ENCODE measurements at regions of chr10 and their contacts with region 1.

Region 1: GRCh38 chr10:17599089-17599488 is 18.1 kb downstream of the HACD1 start:
- DNase-seq: peak in 1 of 2 donors; percentile 22
- ATAC-seq: peak in 4 of 8 donors; percentile 35 to 62 (median 42)
- H3K4me3 ChIP-seq: no peak overlapping the region
- H3K27ac ChIP-seq: no peak overlapping the region
- H3K4me1 ChIP-seq: peaks cover 0 to 7% (median 0%) of the 10 kb centered on the region in 9 donors
- H3K27me3 ChIP-seq: no peaks in the 10 kb centered on the region
- CTCF ChIP-seq: peak in 7 of 9 donors; percentile 29 to 55 (median 35)

Region 2: GRCh38 chr10:17409170-17409733 is 189.8 kb before region 1 on chr10:
- intact Hi-C with region 1: loop called in 2 of 10 experiments (anchors 5 to 10 kb)
- DNase-seq: no peak
- ATAC-seq: no peak
- H3K4me3 ChIP-seq: no peak overlapping the region
- H3K27ac ChIP-seq: no peak overlapping the region
- H3K4me1 ChIP-seq: peaks cover 0 to 4% (median 0%) of the 10 kb centered on the region in 9 donors
- H3K27me3 ChIP-seq: no peaks in the 10 kb centered on the region
- CTCF ChIP-seq: peak in 8 of 9 donors; percentile 21 to 54 (median 40)

Region 3: DNA sequence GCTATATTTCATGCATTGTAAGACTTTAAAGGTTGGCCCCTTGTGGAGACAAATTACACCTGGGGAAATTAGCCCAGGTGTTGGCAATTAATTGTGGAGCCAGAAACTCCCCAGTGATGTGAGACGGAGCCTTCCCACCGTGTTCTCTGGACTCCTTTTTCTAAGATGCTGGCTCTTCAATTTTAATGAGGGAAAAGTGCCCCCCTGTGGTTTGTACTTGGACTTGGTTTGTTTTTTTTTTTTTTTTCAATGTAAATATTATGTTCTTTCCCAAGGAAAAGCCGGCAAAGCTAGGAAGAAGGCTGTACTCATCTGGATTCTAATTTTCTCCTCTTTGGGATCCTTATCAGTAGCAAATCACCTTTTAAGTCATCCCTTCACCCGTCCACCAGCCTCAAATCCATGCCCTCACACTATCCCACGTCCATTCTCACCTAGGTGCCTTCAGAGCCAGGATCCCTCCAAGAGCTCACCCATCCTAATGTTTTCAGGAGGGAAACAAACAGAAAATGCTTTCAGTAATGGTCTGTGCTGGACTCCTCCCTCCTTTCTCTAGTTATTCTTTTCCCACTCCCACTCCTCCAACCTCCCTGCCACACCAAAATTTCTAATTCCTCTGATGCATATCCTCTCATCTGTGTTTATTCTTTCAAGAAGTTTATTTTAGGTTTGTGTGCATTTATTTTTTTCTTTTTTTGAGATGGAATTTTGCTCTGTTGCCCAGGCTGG is 124.3 kb before region 1 on chr10:
- intact Hi-C with region 1: loop called in 2 of 10 experiments (anchors 10 kb)
- DNase-seq: no peak
- ATAC-seq: no peak
- H3K4me3 ChIP-seq: no peak overlapping the region
- H3K27ac ChIP-seq: no peak overlapping the region
- H3K4me1 ChIP-seq: peaks cover 0 to 22% (median 3%) of the 10 kb centered on the region in 9 donors
- H3K27me3 ChIP-seq: peaks cover 0 to 10% (median 0%) of the 10 kb centered on the region in 7 donors
- CTCF ChIP-seq: peak in 5 of 9 donors; percentile 8 to 39 (median 11)

Measured in heart right ventricle (tissue), 16 donors.